Posterior cingulate gyrus (tissue), 11 donors: ENCODE measurements at regions of chr16 and their contacts with region 1.

Region 1: GRCh38 chr16:73047518-73048291 is at the start of gene ZFHX3:
- DNase-seq: peak in 8 of 10 donors; percentile 37 to 92 (median 52)

Region 2: DNA sequence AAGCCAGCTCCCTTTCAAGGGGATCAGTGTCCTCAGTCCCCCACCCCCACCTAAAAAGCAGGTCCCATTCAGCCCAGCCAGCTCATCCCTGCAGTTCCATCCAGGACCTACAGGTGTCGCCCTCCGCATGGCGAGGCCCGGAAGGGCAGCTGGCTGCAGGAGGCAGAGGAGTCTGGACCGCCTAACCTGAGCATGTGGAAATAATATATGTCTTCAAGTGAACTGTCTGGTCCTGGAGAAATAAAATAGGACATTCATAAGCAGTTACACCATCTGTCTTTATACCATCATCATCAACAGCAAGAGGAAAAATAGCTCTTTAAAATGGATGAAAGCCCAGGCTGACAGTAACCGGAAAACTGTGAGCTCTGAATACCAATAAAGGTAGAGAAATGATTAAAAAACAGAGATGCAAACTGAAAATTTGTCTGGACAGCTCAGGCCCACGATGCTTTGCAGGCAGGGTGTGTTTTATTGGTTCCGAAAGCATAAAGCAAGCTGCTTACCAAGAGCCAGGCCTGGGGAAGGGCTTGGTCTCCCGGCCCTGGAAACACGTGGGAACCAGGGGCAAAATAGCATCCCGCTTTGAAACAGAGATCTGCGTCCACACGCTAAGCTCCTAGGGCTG is 215.0 kb before region 1 on chr16:
- intact Hi-C with region 1: loop called (anchors 10 kb)
- DNase-seq: peak; percentile 62 to 96 (median 86)

Region 3: DNA sequence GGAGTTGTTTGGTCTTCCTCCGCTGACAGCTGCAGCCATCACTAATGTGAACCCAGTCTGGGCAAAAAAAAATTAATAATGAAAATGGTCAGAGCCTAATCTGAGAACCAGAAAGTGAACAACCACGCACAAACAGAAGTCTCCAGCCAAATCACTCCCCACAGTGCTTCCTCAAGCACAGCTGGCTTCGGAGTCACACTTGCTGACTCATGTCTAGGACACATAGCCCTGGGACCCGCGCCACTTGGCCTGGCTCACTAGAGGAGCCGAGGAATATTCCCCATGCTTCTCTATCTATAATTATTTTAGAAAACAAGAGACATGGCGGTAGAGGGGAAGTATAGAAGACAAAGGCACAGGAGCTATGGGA is 108.9 kb before region 1 on chr16:
- intact Hi-C with region 1: loop called (anchors 10 kb)
- DNase-seq: peak in 4 of 10 donors; percentile 33 to 80 (median 64)

Region 4: GRCh38 chr16:73036074-73036826 is 11.5 kb before region 1 on chr16:
- intact Hi-C with region 1: no loop called
- DNase-seq: peak in 1 of 10 donors; percentile 34

Region 5: DNA sequence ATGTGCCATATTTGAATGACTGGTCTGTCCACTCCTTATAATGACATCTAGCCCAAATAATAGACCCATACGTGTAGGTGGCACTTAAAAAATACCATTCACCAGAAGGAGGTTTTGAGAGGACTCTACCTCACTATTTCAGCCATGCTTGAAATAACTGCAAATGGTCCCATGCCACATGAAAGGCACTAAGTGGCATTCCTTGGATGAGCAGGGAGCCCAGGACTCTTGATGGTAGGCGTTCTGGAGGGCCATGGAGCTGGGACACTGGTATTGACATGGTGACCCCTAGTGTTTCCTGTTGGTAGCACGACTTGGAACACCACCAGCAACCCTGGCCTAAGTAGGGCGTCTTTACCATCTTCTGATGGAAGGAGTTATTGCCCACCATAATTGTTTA is 149.0 kb after region 1 on chr16:
- intact Hi-C with region 1: loop called (anchors 10 kb)
- DNase-seq: peak in 6 of 10 donors; percentile 26 to 87 (median 56)

Region 6: GRCh38 chr16:73365016-73365551 is 317.4 kb after region 1 on chr16:
- intact Hi-C with region 1: no loop called
- DNase-seq: peak in 2 of 10 donors; percentile 18 to 77